ENCODE measurements at regions of chr17 and their contacts with region 1.

Region 1: GRCh38 chr17:63827002-63827771 is at the starts of genes FTSJ3 and PSMC5:
- DNase-seq: peak; percentile 90 to 98 (median 94)
- ATAC-seq: peak; percentile 91 to 93
- H3K4me3 Mint-ChIP-seq: peak within 1 kb of the TSS; percentile 92 to 100 (median 98)
- H3K27ac Mint-ChIP-seq: peak within 1 kb of the TSS; percentile 97 to 100 (median 99)
- H3K4me1 Mint-ChIP-seq: peaks cover 40 to 83% (median 81%) of the 10 kb centered on the region in 4 donors
- H3K27me3 Mint-ChIP-seq: no peaks in the 10 kb centered on the region
- polyA plus RNA-seq, gene FTSJ3: 16.8 to 43.1 (median 24.0) TPM
- polyA plus RNA-seq, gene PSMC5: 173 to 214 (median 191) TPM

Region 2: GRCh38 chr17:63842540-63843386 is 15.6 kb after region 1 on chr17 and contains the start of gene SMARCD2:
- POLR2A ChIA-PET with region 1: interaction called, 177 read pairs
- DNase-seq: peak; percentile 94 to 99 (median 98)
- ATAC-seq: peak; percentile 86 to 88
- H3K4me3 Mint-ChIP-seq: peak within 1 kb of the TSS; percentile 90 to 98 (median 94)
- H3K27ac Mint-ChIP-seq: peak within 1 kb of the TSS; percentile 90 to 97 (median 94)
- H3K4me1 Mint-ChIP-seq: peaks cover 24 to 52% (median 52%) of the 10 kb centered on the region in 4 donors
- H3K27me3 Mint-ChIP-seq: no peaks in the 10 kb centered on the region
- polyA plus RNA-seq, gene SMARCD2: 65.9 to 112 (median 91.5) TPM

Region 3: GRCh38 chr17:63848834-63849700 is 21.9 kb after region 1 on chr17:
- POLR2A ChIA-PET with region 1: interaction called, 177 read pairs
- DNase-seq: peak; percentile 91 to 96 (median 94)
- ATAC-seq: peak; percentile 95 to 96
- H3K4me3 Mint-ChIP-seq: peak overlapping the region; percentile 71 to 96 (median 86)
- H3K27ac Mint-ChIP-seq: peak overlapping the region; percentile 88 to 98 (median 94)
- H3K4me1 Mint-ChIP-seq: peaks cover 15 to 26% (median 19%) of the 10 kb centered on the region in 4 donors
- H3K27me3 Mint-ChIP-seq: no peaks in the 10 kb centered on the region